Common myeloid progenitor, CD34-positive (primary cell): ENCODE measurements at regions of chr20 and their contacts with region 1.

Region 1: GRCh38 chr20:22675341-22675740 is 91.0 kb upstream of the FOXA2 start:
- DNase-seq: peak in 2 of 3 donors; percentile 56 to 70
- H3K4me3 ChIP-seq: no peak overlapping the region
- H3K27ac ChIP-seq: no peak overlapping the region
- H3K4me1 ChIP-seq: peaks cover 0 to 2% (median 0%) of the 10 kb centered on the region in 4 experiments
- H3K27me3 ChIP-seq: peaks cover 0 to 7% (median 0%) of the 10 kb centered on the region in 5 experiments

Region 2: GRCh38 chr20:22333885-22334545 is 341.3 kb before region 1 on chr20:
- CTCF ChIA-PET with region 1: interaction called, 98 read pairs
- POLR2A ChIA-PET with region 1: no interaction called
- DNase-seq: peak; percentile 61 to 85 (median 80)
- H3K4me3 ChIP-seq: no peak overlapping the region
- H3K27ac ChIP-seq: no peak overlapping the region
- H3K4me1 ChIP-seq: no peaks in the 10 kb centered on the region
- H3K27me3 ChIP-seq: peaks cover 0 to 35% (median 15%) of the 10 kb centered on the region in 5 experiments

Region 3: GRCh38 chr20:22700367-22700766 is 25.0 kb after region 1 on chr20:
- CTCF ChIA-PET with region 1: no interaction called
- POLR2A ChIA-PET with region 1: no interaction called
- DNase-seq: no peak
- H3K4me3 ChIP-seq: no peak overlapping the region
- H3K27ac ChIP-seq: no peak overlapping the region
- H3K4me1 ChIP-seq: no peaks in the 10 kb centered on the region
- H3K27me3 ChIP-seq: peaks cover 0 to 3% (median 0%) of the 10 kb centered on the region in 5 experiments